ENCODE measurements at regions of chr19 and their contacts with region 1.

Region 1: GRCh38 chr19:45717166-45717982 is 13.3 kb downstream of the FBXO46 start:
- DNase-seq: peak; percentile 92 to 99 (median 96)
- ATAC-seq: peak; percentile 95
- H3K4me3 ChIP-seq: peak overlapping the region; percentile 78
- H3K4me3 Mint-ChIP-seq: peak overlapping the region; percentile 90
- H3K27ac ChIP-seq: peak overlapping the region; percentile 80 to 96
- H3K27ac Mint-ChIP-seq: peak overlapping the region; percentile 89
- H3K4me1 ChIP-seq: peaks cover 28% of the 10 kb centered on the region
- H3K4me1 Mint-ChIP-seq: peaks cover 42% of the 10 kb centered on the region
- H3K27me3 ChIP-seq: no peaks in the 10 kb centered on the region
- H3K27me3 Mint-ChIP-seq: no peaks in the 10 kb centered on the region
- CTCF ChIP-seq: no peak

Region 2: GRCh38 chr19:45250832-45251451 is 466.4 kb before region 1 on chr19 and contains the start of gene MARK4:
- CTCF ChIA-PET with region 1: no interaction called
- POLR2A ChIA-PET with region 1: no interaction called
- intact Hi-C with region 1: loop called in 1 of 2 experiments (anchors 5 kb)
- DNase-seq: peak; percentile 32 to 84 (median 52)
- ATAC-seq: peak; percentile 71
- H3K4me3 ChIP-seq: peak within 1 kb of the TSS; percentile 83
- H3K4me3 Mint-ChIP-seq: peak within 1 kb of the TSS; percentile 90
- H3K27ac ChIP-seq: no peak within 1 kb of the TSS
- H3K27ac Mint-ChIP-seq: peak within 1 kb of the TSS; percentile 72
- H3K4me1 ChIP-seq: peaks cover 56% of the 10 kb centered on the region
- H3K4me1 Mint-ChIP-seq: peaks cover 35% of the 10 kb centered on the region
- H3K27me3 ChIP-seq: no peaks in the 10 kb centered on the region
- H3K27me3 Mint-ChIP-seq: no peaks in the 10 kb centered on the region
- CTCF ChIP-seq: no peak
- total RNA-seq, gene MARK4: 18.1 to 19.8 TPM

Region 3: DNA sequence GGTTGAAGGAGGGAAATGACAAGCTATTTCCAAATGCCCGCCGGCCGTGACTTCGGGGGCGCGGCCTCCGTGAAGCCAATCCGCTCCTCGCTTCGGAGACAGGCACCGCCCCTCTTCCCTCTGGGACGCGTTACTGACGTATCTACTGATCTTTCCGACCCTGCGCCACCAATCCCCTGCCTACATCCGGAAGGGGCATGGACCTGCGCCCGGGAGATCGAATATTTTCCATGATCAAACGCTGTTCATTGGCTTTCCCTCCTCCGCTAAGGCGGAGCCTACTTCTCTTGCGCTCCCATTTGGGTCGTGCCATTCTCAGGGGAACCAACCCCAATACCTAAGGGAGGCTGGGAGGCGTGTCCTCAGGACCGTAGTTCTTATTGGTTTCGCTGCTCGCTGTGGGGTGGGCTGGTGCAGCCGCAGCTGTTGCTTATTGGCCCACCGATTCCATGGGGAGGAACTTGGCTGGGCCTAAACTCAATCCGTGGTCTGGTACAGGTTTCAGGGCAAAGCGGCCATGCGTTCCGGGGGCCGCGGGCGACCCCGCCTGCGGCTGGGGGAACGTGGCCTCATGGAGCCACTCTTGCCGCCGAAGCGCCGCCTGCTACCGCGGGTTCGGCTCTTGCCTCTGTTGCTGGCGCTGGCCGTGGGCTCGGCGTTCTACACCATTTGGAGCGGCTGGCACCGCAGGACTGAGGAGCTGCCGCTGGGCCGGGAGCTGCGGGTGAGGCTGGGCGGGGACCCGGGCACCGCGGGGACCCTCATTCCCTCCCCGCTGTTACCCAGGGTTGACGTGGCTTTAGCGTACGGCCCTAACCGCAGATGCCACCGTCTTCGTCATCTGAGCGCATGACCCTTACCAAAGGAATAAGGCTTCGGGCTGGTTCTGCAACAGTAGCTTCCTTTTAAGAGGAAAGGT is 24.9 kb before region 1 on chr19 and contains the start of gene QPCTL:
- CTCF ChIA-PET with region 1: interaction called, 22 read pairs
- POLR2A ChIA-PET with region 1: interaction called, 48 read pairs
- intact Hi-C with region 1: loop called (anchors 1 kb)
- DNase-seq: peak; percentile 92 to 99 (median 94)
- ATAC-seq: peak; percentile 87
- H3K4me3 ChIP-seq: peak within 1 kb of the TSS; percentile 85
- H3K4me3 Mint-ChIP-seq: peak within 1 kb of the TSS; percentile 96
- H3K27ac ChIP-seq: peak within 1 kb of the TSS; percentile 86 to 93
- H3K27ac Mint-ChIP-seq: peak within 1 kb of the TSS; percentile 95
- H3K4me1 ChIP-seq: peaks cover 39% of the 10 kb centered on the region
- H3K4me1 Mint-ChIP-seq: peaks cover 33% of the 10 kb centered on the region
- H3K27me3 ChIP-seq: no peaks in the 10 kb centered on the region
- H3K27me3 Mint-ChIP-seq: no peaks in the 10 kb centered on the region
- CTCF ChIP-seq: no peak
- total RNA-seq, gene QPCTL: 3.7 to 5.0 TPM

Region 4: GRCh38 chr19:45753546-45753945 is 36.2 kb after region 1 on chr19:
- CTCF ChIA-PET with region 1: no interaction called
- POLR2A ChIA-PET with region 1: no interaction called
- intact Hi-C with region 1: no loop called
- DNase-seq: no peak
- ATAC-seq: no peak
- H3K4me3 ChIP-seq: no peak overlapping the region
- H3K4me3 Mint-ChIP-seq: no peak overlapping the region
- H3K27ac ChIP-seq: no peak overlapping the region
- H3K27ac Mint-ChIP-seq: no peak overlapping the region
- H3K4me1 ChIP-seq: no peaks in the 10 kb centered on the region
- H3K4me1 Mint-ChIP-seq: no peaks in the 10 kb centered on the region
- H3K27me3 ChIP-seq: no peaks in the 10 kb centered on the region
- H3K27me3 Mint-ChIP-seq: no peaks in the 10 kb centered on the region
- CTCF ChIP-seq: no peak

Region 5: GRCh38 chr19:45770192-45771101 is 53.1 kb after region 1 on chr19:
- CTCF ChIA-PET with region 1: interaction called, 3 read pairs
- POLR2A ChIA-PET with region 1: interaction called, 18 read pairs
- intact Hi-C with region 1: no loop called
- DNase-seq: peak; percentile 82 to 95 (median 90)
- ATAC-seq: peak; percentile 75
- H3K4me3 ChIP-seq: peak overlapping the region; percentile 79
- H3K4me3 Mint-ChIP-seq: peak overlapping the region; percentile 89
- H3K27ac ChIP-seq: peak overlapping the region in 1 of 2 donors; percentile 52
- H3K27ac Mint-ChIP-seq: peak overlapping the region; percentile 87
- H3K4me1 ChIP-seq: peaks cover 35% of the 10 kb centered on the region
- H3K4me1 Mint-ChIP-seq: peaks cover 25% of the 10 kb centered on the region
- H3K27me3 ChIP-seq: peaks cover 12 to 22% of the 10 kb centered on the region in 2 experiments
- H3K27me3 Mint-ChIP-seq: peaks cover 5% of the 10 kb centered on the region
- CTCF ChIP-seq: peak; percentile 97

Region 6: DNA sequence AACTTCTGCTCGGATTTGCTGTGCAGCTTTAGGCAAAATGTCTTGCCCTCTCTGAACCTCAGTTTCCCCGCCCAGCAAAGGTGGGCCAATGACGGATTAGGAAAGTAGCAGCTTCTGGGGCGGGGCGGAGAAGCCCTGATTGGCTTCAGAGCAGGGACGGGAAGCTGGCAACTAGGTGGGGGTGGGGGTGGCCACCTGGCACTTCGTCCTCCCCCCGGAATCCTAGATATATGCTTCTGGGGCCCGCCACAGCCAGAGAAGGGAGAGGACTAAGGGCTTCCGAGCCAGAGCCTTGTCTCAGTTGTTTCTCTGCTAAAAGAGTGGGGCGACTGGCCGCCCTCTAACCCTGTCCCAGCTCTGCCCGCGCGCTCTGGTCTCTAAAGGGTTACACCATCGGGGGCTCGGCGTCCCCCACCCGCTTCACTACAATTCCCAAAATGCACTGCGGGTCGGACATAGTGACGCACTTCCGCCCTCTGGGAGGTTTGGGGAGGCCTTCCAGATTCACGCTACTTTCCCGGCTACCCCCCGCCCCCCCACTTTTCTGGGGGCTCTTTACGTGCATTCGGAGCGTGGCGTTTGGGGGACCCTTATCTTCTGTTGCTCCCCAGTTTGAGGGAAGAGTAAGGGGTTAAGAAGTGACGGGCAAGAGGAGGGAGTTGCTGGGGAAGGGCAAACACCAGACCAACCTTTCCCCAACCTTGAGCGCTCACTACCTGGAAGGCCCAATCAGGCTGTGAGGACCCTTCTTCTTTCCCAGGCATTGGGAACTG is 169.2 kb after region 1 on chr19:
- CTCF ChIA-PET with region 1: no interaction called
- POLR2A ChIA-PET with region 1: interaction called, 4 read pairs
- intact Hi-C with region 1: loop called in 1 of 2 experiments (anchors 2 kb)
- DNase-seq: peak; percentile 80 to 95 (median 85)
- ATAC-seq: peak; percentile 68
- H3K4me3 ChIP-seq: peak overlapping the region; percentile 78
- H3K4me3 Mint-ChIP-seq: peak overlapping the region; percentile 98
- H3K27ac ChIP-seq: peak overlapping the region; percentile 82 to 87
- H3K27ac Mint-ChIP-seq: peak overlapping the region; percentile 99
- H3K4me1 ChIP-seq: peaks cover 46% of the 10 kb centered on the region
- H3K4me1 Mint-ChIP-seq: peaks cover 31% of the 10 kb centered on the region
- H3K27me3 ChIP-seq: no peaks in the 10 kb centered on the region
- H3K27me3 Mint-ChIP-seq: no peaks in the 10 kb centered on the region
- CTCF ChIP-seq: no peak

Region 7: DNA sequence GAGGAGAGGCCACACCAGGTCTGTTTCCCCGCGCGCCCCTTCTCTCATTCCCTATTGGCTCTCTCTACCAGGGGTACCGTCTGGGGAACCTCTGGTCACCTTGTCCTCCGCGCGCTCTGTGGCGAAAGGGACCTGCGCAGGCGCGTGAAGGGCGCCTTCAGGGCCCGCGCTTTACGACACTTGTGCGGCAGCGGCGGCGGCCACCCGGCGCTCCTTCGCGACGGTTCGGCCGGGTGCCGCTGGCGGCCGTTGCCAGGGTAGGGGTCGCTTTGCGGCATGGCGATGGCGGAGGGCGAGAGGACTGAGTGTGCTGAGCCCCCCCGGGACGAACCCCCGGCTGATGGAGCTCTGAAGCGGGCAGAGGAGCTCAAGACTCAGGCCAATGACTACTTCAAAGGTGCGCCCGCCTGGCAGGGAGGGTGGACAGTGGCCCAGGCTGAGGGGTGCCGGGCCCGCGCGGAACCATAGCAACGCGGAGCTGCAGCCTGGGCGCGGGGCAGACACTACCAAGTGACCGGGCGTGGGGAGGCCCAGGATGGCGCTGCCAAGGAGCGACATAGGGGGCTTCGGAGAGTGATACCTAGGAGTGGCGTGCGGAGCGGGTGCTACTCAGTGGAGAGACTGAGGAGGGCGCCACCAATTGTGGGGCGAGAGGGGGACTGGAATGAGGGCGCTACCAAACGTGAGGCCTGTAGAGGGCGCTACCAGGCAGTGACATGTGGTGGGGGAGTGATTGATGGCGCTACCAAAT is 629.6 kb after region 1 on chr19 and contains the start of gene PPP5C:
- CTCF ChIA-PET with region 1: no interaction called
- POLR2A ChIA-PET with region 1: no interaction called
- intact Hi-C with region 1: loop called in 1 of 2 experiments (anchors 5 kb)
- DNase-seq: peak; percentile 67 to 93 (median 81)
- ATAC-seq: peak; percentile 84
- H3K4me3 ChIP-seq: peak within 1 kb of the TSS; percentile 100
- H3K4me3 Mint-ChIP-seq: peak within 1 kb of the TSS; percentile 98
- H3K27ac ChIP-seq: peak within 1 kb of the TSS; percentile 72 to 80
- H3K27ac Mint-ChIP-seq: peak within 1 kb of the TSS; percentile 91
- H3K4me1 ChIP-seq: peaks cover 56% of the 10 kb centered on the region
- H3K4me1 Mint-ChIP-seq: peaks cover 58% of the 10 kb centered on the region
- H3K27me3 ChIP-seq: no peaks in the 10 kb centered on the region
- H3K27me3 Mint-ChIP-seq: no peaks in the 10 kb centered on the region
- CTCF ChIP-seq: peak; percentile 10
- total RNA-seq, gene PPP5C: 18.9 to 20.2 TPM